Heart left ventricle (tissue), 16 donors: ENCODE measurements at regions of chr18 and their contacts with region 1.

Region 1: GRCh38 chr18:22485808-22486244 is 68.1 kb upstream of the CTAGE1 start:
- DNase-seq: no peak
- ATAC-seq: no peak
- H3K4me3 ChIP-seq: no peak overlapping the region
- H3K27ac ChIP-seq: no peak overlapping the region
- H3K4me1 ChIP-seq: peaks cover 0 to 29% (median 6%) of the 10 kb centered on the region in 12 donors
- H3K27me3 ChIP-seq: no peaks in the 10 kb centered on the region
- CTCF ChIP-seq: no peak
- POLR2A ChIP-seq: no peak

Region 2: GRCh38 chr18:22542401-22542835 is 56.6 kb after region 1 on chr18:
- intact Hi-C with region 1: loop called in 1 of 10 experiments (anchors 10 kb)
- DNase-seq: peak in 3 of 5 donors; percentile 37 to 64 (median 47)
- ATAC-seq: peak; percentile 22 to 72 (median 40)
- H3K4me3 ChIP-seq: no peak overlapping the region
- H3K27ac ChIP-seq: peak overlapping the region in 8 of 12 donors; percentile 2 to 58 (median 24)
- H3K4me1 ChIP-seq: peaks cover 0 to 61% (median 22%) of the 10 kb centered on the region in 12 donors
- H3K27me3 ChIP-seq: no peaks in the 10 kb centered on the region
- CTCF ChIP-seq: no peak
- POLR2A ChIP-seq: no peak